Activated naive CD4-positive, alpha-beta T cell treated with anti-CD3 and anti-CD28 coated beads for 36 hours (primary cell): ENCODE measurements at regions of chrX and their contacts with region 1.

Region 1: DNA sequence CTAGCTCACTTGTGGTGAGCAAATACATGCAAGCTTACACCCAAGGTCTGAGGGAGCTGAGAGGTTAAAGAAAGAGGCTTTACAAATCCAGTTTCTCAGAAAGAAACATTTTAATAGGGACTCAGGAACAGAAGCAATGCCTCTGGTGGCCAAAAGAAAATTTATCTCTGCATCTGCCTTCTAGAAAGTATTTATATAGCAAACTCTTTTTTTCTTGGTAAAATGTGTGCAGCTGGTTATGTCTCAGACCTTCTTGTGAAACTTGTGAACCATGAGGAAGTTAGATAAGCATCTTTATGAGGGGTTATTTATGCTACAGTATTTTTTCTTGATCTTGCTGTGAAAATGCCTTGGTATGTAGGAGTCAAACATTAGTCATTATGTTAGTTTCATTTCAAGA is 48.5 kb upstream of the CYSLTR1 start:
- DNase-seq: no peak
- H3K4me3 Mint-ChIP-seq: no peak overlapping the region
- H3K27ac Mint-ChIP-seq: no peak overlapping the region
- H3K4me1 Mint-ChIP-seq: peaks cover 22% of the 10 kb centered on the region
- H3K27me3 Mint-ChIP-seq: no peaks in the 10 kb centered on the region

Region 2: DNA sequence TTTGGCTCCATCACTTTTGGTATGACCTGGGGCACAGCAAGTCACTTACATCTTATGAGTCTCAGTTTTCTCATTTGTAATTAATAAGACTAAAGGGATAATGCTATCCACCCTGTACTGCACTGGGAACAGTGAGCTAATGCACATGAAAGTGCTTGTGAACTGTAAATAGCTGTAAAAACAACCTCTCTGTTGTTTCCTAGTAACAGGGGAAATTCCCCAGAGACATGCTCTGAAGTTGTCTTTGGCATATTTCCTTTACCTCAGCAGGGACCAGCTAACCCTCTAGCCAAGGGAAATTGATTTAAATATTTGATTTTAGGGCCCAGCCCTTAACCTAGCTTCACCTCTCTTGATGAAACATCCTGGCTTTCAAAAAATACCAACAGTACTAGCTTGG is 42.4 kb before region 1 on chrX:
- CTCF ChIA-PET with region 1: no interaction called
- intact Hi-C with region 1: no loop called
- DNase-seq: no peak
- H3K4me3 Mint-ChIP-seq: no peak overlapping the region
- H3K27ac Mint-ChIP-seq: peak overlapping the region; percentile 11
- H3K4me1 Mint-ChIP-seq: peaks cover 58% of the 10 kb centered on the region
- H3K27me3 Mint-ChIP-seq: no peaks in the 10 kb centered on the region

Region 3: GRCh38 chrX:78357342-78358060 is 18.4 kb before region 1 on chrX:
- CTCF ChIA-PET with region 1: no interaction called
- intact Hi-C with region 1: no loop called
- DNase-seq: no peak
- H3K4me3 Mint-ChIP-seq: no peak overlapping the region
- H3K27ac Mint-ChIP-seq: no peak overlapping the region
- H3K4me1 Mint-ChIP-seq: no peaks in the 10 kb centered on the region
- H3K27me3 Mint-ChIP-seq: no peaks in the 10 kb centered on the region

Region 4: GRCh38 chrX:78653118-78653822 is 277.4 kb after region 1 on chrX:
- CTCF ChIA-PET with region 1: no interaction called
- intact Hi-C with region 1: loop called (anchors 5 kb)
- DNase-seq: no peak
- H3K4me3 Mint-ChIP-seq: no peak overlapping the region
- H3K27ac Mint-ChIP-seq: no peak overlapping the region
- H3K4me1 Mint-ChIP-seq: peaks cover 15% of the 10 kb centered on the region
- H3K27me3 Mint-ChIP-seq: no peaks in the 10 kb centered on the region